ENCODE measurements at regions of chr9 and their contacts with region 1.

Region 1: DNA sequence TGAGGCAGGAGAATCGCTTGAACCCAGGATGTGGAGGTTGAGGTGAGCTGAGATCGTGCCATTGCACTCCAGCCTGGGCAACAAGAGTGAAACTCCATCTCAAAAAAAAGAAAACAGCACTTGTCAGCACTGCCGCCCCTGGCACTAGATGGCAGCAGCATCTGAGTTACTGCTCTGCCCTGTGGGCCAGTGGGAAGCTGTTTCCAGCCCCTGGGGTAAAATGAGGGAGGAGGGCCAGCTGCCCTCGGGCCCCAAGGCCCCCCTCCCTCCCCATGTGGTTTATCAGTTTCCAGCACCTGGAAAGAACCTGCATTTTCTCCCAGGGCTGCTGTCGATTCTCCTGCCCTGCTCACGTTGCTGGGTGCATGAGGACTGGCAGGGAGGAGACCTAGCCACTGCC is 13.2 kb upstream of the CEL start:
- DNase-seq: peak; percentile 78 to 95 (median 94)
- ATAC-seq: peak; percentile 76 to 86 (median 81)
- H3K4me3 ChIP-seq: peak overlapping the region in 1 of 4 donors; percentile 17
- H3K27ac ChIP-seq: peak overlapping the region; percentile 36 to 73 (median 59)
- H3K4me1 ChIP-seq: peaks cover 6 to 40% (median 24%) of the 10 kb centered on the region in 3 donors
- H3K27me3 ChIP-seq: no peaks in the 10 kb centered on the region
- CTCF ChIP-seq: peak; percentile 19 to 45 (median 38)

Region 2: GRCh38 chr9:133103183-133103986 is 54.8 kb after region 1 on chr9:
- intact Hi-C with region 1: loop called in 1 of 3 experiments (anchors 5 kb)
- DNase-seq: peak in 5 of 6 donors; percentile 58 to 92 (median 79)
- ATAC-seq: peak; percentile 57 to 90 (median 85)
- H3K4me3 ChIP-seq: no peak overlapping the region
- H3K27ac ChIP-seq: no peak overlapping the region
- H3K4me1 ChIP-seq: no peaks in the 10 kb centered on the region
- H3K27me3 ChIP-seq: no peaks in the 10 kb centered on the region
- CTCF ChIP-seq: peak; percentile 93 to 97 (median 96)

Region 3: DNA sequence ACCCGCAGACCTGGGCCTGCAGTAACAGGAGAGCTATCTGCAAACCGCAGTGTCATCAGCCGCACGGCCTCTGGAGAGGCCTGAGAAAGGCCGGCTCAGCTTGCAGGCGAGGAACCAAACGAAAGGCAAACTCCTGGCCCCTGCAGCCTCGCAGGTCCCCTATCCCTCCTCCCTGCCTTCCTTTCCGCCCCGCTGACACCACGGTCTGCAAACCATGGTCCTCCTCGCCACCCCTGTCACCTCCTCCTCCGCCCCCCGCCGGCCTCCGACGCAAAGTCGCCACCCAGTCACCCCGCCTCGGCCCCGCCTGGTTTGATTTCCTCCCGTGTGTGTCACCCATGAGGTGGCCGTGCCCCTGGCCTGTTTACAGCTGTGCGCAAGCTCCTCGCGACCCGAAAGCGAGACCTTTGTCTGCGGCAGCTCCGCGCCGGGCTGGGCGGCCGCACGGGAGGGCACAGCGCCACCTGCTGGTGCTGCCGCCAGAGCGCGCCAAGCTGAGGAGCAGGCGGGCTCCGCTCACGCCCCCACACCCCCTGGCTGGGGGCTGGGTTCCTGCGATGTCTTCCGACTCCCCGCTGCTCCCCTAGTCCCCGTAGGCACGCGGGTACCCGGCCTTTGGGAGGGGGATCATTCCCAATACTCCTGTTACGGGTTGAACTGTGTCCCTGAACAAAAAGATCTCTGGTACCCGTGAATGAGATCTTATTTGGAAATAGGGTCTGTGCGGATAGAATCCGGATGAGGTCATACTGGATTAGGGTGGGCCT is 95.8 kb after region 1 on chr9:
- intact Hi-C with region 1: loop called in 2 of 3 experiments (anchors 5 kb)
- DNase-seq: peak in 5 of 6 donors; percentile 68 to 92 (median 82)
- ATAC-seq: peak in 3 of 4 donors; percentile 30 to 53 (median 50)
- H3K4me3 ChIP-seq: peak overlapping the region in 2 of 4 donors; percentile 23 to 27
- H3K27ac ChIP-seq: peak overlapping the region in 1 of 4 donors; percentile 16
- H3K4me1 ChIP-seq: peaks cover 6 to 36% (median 8%) of the 10 kb centered on the region in 3 donors
- H3K27me3 ChIP-seq: no peaks in the 10 kb centered on the region
- CTCF ChIP-seq: peak; percentile 90 to 98 (median 97)

Region 4: DNA sequence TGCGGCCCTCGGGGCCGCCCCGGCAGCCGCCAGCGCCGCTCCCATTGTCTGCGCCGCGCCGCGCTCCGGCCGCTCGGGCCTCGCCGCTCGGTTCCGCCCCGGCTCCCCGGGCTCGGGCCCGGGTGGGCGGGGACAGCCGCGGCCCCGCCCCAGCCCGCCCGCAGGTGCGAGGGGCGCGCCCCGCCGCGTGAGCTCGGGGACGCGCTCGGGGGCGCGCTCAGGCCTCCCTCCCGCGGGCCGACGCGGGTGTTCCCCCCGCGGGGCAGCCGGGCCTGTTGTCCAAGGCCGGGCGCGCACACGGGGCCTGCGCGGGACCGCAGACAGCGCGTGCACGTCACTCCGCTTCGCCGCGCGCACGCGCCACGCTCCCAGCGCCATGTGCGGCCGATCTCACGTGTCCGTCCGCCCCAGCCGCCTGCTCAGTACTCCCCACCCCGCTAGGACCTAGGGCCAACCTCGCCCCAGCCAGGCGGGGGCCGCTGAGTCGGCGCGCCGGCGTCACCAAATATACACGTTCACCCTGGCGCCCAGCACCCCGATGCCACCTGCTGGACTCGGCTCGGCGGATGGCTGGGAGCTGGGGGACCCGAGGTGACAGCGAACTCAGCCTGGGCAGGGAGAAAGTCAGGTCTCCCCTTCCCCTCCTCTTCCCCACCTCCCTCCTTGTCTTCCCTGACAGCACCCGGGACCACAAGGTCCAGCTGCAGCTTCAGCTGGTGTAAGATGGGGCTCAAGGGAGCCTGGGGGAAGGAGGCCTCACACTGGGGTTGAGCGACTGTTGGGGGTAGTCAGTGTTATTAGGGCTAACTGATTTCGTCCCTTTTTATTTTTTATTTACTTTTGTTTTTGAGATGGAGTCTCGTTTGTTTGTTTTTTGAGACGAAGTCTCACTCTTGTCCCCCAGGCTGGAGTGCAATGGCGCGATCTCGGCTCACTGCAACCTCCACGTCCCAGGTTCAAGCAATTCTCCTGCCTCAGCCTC is 100.8 kb after region 1 on chr9:
- intact Hi-C with region 1: loop called in 2 of 3 experiments (anchors 5 kb)
- DNase-seq: peak; percentile 88 to 98 (median 94)
- ATAC-seq: peak; percentile 81 to 86 (median 82)
- H3K4me3 ChIP-seq: peak overlapping the region in 3 of 4 donors; percentile 13 to 87 (median 65)
- H3K27ac ChIP-seq: peak overlapping the region; percentile 78 to 88 (median 86)
- H3K4me1 ChIP-seq: peaks cover 0 to 16% (median 3%) of the 10 kb centered on the region in 3 donors
- H3K27me3 ChIP-seq: no peaks in the 10 kb centered on the region
- CTCF ChIP-seq: no peak

Region 5: GRCh38 chr9:133356391-133357091 is 308.0 kb after region 1 on chr9 and contains the starts of genes SURF1 and SURF2:
- intact Hi-C with region 1: loop called in 1 of 3 experiments (anchors 10 kb)
- DNase-seq: peak; percentile 84 to 97 (median 90)
- ATAC-seq: peak; percentile 85 to 96 (median 92)
- H3K4me3 ChIP-seq: peak within 1 kb of the TSS; percentile 81 to 95 (median 88)
- H3K27ac ChIP-seq: peak within 1 kb of the TSS; percentile 37 to 53 (median 46)
- H3K4me1 ChIP-seq: peaks cover 7 to 17% (median 17%) of the 10 kb centered on the region in 3 donors
- H3K27me3 ChIP-seq: no peaks in the 10 kb centered on the region
- CTCF ChIP-seq: no peak
- total RNA-seq, gene SURF1: 33.6 to 47.8 (median 37.2) TPM
- total RNA-seq, gene SURF2: 7.8 to 18.7 (median 11.9) TPM

Region 6: DNA sequence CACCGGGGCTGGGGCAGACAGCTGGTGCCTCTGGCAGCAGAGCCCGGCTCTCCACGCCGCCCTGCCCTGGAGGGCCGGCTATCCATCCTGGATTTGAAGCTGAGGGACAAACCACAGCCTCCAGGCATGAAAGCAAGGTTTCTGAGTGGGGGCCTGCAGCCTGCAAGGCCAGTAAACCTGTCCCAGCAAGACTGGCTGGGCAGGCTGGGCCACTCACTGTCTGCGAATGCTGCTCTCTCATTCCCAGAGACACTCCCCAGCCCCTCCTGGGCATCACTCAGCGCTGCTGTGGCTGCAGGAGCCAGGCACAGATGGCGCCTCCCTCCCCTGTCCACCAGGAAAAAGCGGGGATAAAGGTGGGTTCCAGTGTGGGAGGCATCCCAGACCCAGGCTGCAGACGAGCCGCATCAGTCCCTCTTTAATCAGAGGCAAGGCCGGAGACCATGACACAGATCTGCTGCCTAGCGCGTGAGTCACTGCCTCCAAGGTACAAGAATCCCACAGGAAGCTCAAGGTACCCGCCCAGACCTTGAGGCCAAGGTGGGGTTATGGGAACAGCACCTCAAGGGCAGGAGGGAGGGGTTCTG is 825.6 kb after region 1 on chr9:
- intact Hi-C with region 1: no loop called
- DNase-seq: no peak
- ATAC-seq: peak in 1 of 4 donors; percentile 25
- H3K4me3 ChIP-seq: no peak overlapping the region
- H3K27ac ChIP-seq: no peak overlapping the region
- H3K4me1 ChIP-seq: peaks cover 0 to 7% (median 0%) of the 10 kb centered on the region in 3 donors
- H3K27me3 ChIP-seq: no peaks in the 10 kb centered on the region
- CTCF ChIP-seq: no peak